Activated naive CD4-positive, alpha-beta T cell treated with anti-CD3 and anti-CD28 coated beads for 36 hours (primary cell): ENCODE measurements at regions of chr7 and their contacts with region 1.

Region 1: GRCh38 chr7:64618785-64619456 is 47.0 kb upstream of the ZNF107 start:
- DNase-seq: peak; percentile 26
- H3K4me3 Mint-ChIP-seq: no peak overlapping the region
- H3K27ac Mint-ChIP-seq: no peak overlapping the region
- H3K4me1 Mint-ChIP-seq: no peaks in the 10 kb centered on the region
- H3K27me3 Mint-ChIP-seq: no peaks in the 10 kb centered on the region

Region 2: GRCh38 chr7:64180989-64181388 is 437.9 kb before region 1 on chr7:
- CTCF ChIA-PET with region 1: interaction called, 6 read pairs
- intact Hi-C with region 1: loop called (anchors 1 kb)
- DNase-seq: peak; percentile 38
- H3K4me3 Mint-ChIP-seq: no peak overlapping the region
- H3K27ac Mint-ChIP-seq: no peak overlapping the region
- H3K4me1 Mint-ChIP-seq: peaks cover 2% of the 10 kb centered on the region
- H3K27me3 Mint-ChIP-seq: peaks cover 12% of the 10 kb centered on the region

Region 3: GRCh38 chr7:64307254-64308015 is 311.5 kb before region 1 on chr7:
- CTCF ChIA-PET with region 1: no interaction called
- intact Hi-C with region 1: no loop called
- DNase-seq: peak; percentile 95
- H3K4me3 Mint-ChIP-seq: peak overlapping the region; percentile 89
- H3K27ac Mint-ChIP-seq: peak overlapping the region; percentile 95
- H3K4me1 Mint-ChIP-seq: peaks cover 26% of the 10 kb centered on the region
- H3K27me3 Mint-ChIP-seq: no peaks in the 10 kb centered on the region

Region 4: DNA sequence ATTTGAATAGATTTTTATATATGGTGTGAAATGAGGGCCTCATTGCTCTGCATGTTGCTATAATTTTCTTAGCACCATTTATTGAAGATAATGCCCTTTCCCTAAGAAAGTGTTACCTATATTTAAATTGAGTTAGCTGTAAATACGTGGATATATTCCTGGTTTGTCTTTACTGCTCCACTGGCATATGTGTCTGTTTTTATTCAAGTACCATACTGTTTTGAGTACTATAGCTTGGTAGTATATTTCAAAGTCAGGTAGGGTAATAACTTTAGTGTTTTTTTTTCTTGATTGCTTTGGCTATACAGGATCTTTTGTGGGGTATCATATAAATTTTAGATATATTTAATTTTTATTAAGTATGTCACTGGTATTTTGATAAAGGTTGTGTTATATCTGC is 315.6 kb after region 1 on chr7:
- CTCF ChIA-PET with region 1: no interaction called
- intact Hi-C with region 1: no loop called
- DNase-seq: no peak
- H3K4me3 Mint-ChIP-seq: no peak overlapping the region
- H3K27ac Mint-ChIP-seq: no peak overlapping the region
- H3K4me1 Mint-ChIP-seq: no peaks in the 10 kb centered on the region
- H3K27me3 Mint-ChIP-seq: no peaks in the 10 kb centered on the region